ENCODE measurements at regions of chr10 and their contacts with region 1.

Region 1: GRCh38 chr10:96229568-96230030 is 41.8 kb downstream of the BLNK start:
- DNase-seq: peak; percentile 62 to 89
- H3K4me3 ChIP-seq: no peak overlapping the region
- CTCF ChIP-seq: peak in 1 of 3 donors; percentile 67
- POLR2A ChIP-seq: no peak

Region 2: DNA sequence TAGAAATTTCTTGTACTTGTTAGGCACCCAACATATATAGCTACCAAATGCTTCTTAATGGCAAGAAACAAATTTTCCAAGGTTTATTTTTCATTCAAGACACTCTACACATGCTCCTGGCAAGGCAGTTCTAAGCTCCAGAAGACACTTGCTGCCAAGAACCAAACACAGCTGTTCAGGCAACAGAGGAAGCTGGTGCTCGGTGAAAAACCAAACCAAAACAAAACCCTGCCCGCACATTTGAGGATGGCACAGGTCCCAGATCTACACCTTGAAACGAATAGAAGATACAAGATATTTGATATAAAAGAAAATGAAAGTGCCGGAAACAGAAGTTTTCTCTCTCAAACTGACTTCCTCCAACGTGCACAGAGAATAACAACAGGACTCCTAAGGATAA is 69.8 kb after region 1 on chr10:
- intact Hi-C with region 1: loop called (anchors 5 kb)
- DNase-seq: no peak
- H3K4me3 ChIP-seq: no peak overlapping the region
- CTCF ChIP-seq: no peak
- POLR2A ChIP-seq: no peak

Region 3: GRCh38 chr10:96700374-96701099 is 470.9 kb after region 1 on chr10:
- intact Hi-C with region 1: no loop called
- DNase-seq: no peak
- H3K4me3 ChIP-seq: no peak overlapping the region
- CTCF ChIP-seq: no peak
- POLR2A ChIP-seq: no peak